Panc1 (cell line): ENCODE measurements at regions of chr19 and their contacts with region 1.

Region 1: GRCh38 chr19:39187559-39187957 is 9.2 kb upstream of the NCCRP1 start:
- DNase-seq: no peak
- ATAC-seq: peak; percentile 40
- H3K4me3 ChIP-seq: no peak overlapping the region
- H3K27ac ChIP-seq: no peak overlapping the region
- H3K4me1 ChIP-seq: no peaks in the 10 kb centered on the region; the same call in 1 of the 2 replicates
- H3K27me3 ChIP-seq: no peaks in the 10 kb centered on the region
- CTCF ChIP-seq: no peak

Region 2: DNA sequence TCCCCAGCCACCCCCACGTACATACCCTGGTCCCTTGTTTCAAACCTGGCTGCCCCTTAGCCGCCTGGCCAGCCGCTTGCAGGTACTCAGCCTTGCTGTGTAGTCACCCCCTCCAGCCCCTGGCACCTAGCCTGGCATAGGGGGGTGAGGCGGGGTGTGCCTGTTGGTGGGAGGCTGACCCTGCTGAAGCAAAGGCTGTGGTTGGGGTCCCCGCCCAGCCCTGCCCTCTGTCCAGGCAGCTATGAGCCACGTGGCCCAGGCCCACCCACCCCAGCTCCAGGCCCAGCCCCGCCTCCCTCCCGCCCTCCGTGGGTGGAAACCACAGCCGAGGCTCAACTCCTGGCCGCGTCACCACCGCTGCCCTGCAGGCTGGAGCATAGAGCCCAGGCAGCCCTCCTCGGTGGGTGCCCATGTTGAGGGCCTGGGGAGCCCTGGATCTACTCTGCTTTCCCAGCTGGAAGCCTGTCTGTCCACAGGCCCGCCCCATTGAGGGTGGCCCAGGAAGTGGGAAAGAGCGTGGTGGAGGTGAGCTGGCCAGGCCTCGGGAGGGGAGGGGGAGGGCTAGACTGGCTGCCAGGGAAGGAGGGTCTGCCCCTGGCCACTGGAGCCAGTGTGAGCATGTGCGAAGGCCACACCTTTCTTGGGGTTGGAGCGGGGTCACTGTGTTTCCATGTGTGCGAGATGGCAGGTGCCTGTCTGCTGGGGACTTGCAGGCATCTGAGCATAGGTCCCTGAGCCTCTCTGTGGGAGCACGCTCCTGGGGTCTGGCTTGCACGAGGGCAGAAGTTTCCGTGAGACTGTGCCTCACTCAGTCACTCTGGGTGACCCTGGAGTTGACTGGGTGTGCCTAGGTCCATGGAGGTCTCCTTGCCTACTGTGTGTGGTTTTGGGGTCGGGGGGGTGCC is 31.0 kb before region 1 on chr19:
- CTCF ChIA-PET with region 1: no interaction called
- POLR2A ChIA-PET with region 1: interaction called, 16 read pairs
- in situ Hi-C with region 1: no loop called
- intact Hi-C with region 1: no loop called
- DNase-seq: no peak
- ATAC-seq: no peak
- H3K4me3 ChIP-seq: no peak overlapping the region
- H3K27ac ChIP-seq: no peak overlapping the region
- H3K4me1 ChIP-seq: peaks cover 66% of the 10 kb centered on the region
- H3K27me3 ChIP-seq: no peaks in the 10 kb centered on the region
- CTCF ChIP-seq: no peak

Region 3: DNA sequence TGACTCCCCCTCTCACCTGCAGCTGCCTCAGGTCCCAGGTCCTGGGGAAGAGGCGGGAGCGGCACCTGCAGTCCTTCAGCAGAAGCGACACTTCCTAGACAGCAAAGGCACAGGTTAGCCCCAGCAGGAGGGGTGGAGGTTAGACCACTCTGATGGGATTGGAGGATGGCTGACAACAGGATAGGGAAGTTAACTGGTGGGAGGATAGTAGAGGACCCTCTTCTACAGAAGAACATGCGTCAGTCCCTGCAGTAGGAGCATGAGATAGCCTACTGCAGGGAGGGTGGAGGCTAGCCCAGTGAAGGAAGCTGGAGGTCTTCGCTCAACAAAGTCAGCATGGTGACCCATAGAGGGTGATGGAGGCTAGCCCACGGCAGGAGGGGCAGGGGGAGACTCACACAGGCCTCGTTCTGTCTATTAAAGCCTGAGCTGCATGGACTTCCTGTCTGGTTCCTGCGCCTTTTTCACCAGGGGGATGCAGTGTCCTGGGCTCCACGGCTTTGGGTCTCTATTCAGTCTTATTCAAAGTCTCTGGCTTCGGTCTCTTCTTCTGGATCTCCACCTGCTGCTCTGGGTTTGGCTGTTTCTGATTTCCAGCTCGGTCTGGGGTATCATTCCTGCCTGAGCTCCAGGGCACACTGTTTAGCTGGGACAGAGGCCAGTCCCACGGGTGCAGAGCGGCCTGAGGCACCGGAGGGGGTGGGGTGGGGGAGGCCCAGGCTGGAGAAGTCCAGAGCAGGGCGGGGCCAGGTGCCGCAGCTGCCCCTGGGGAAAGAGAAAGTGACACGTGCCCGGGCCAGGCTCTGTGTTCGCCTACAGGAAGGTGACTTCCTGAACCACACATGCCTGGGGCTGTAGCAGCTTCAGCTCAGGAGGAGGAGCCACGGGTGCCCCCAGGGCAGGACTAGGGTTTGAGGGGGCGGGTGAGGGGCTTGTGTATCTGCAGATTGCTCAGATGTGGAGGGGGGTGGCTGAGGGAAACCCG is 49.9 kb after region 1 on chr19:
- CTCF ChIA-PET with region 1: no interaction called
- POLR2A ChIA-PET with region 1: no interaction called
- in situ Hi-C with region 1: no loop called
- intact Hi-C with region 1: no loop called
- DNase-seq: no peak
- ATAC-seq: peak; percentile 73
- H3K4me3 ChIP-seq: peak overlapping the region in 1 of 2 experiments; percentile 23; a peak in 2 of 4 replicates
- H3K27ac ChIP-seq: no peak overlapping the region
- H3K4me1 ChIP-seq: no peaks in the 10 kb centered on the region
- H3K27me3 ChIP-seq: no peaks in the 10 kb centered on the region
- CTCF ChIP-seq: no peak